PC-9 (cell line): ENCODE measurements at regions of chr1 and their contacts with region 1.

Region 1: GRCh38 chr1:167803358-167804207 is 81.8 kb downstream of the MPZL1 start:
- DNase-seq: peak; percentile 86 to 87
- H3K4me3 ChIP-seq: no peak overlapping the region
- H3K27ac ChIP-seq: no peak overlapping the region
- H3K4me1 ChIP-seq: no peaks in the 10 kb centered on the region
- H3K27me3 ChIP-seq: no peaks in the 10 kb centered on the region
- CTCF ChIP-seq: peak; percentile 94

Region 2: DNA sequence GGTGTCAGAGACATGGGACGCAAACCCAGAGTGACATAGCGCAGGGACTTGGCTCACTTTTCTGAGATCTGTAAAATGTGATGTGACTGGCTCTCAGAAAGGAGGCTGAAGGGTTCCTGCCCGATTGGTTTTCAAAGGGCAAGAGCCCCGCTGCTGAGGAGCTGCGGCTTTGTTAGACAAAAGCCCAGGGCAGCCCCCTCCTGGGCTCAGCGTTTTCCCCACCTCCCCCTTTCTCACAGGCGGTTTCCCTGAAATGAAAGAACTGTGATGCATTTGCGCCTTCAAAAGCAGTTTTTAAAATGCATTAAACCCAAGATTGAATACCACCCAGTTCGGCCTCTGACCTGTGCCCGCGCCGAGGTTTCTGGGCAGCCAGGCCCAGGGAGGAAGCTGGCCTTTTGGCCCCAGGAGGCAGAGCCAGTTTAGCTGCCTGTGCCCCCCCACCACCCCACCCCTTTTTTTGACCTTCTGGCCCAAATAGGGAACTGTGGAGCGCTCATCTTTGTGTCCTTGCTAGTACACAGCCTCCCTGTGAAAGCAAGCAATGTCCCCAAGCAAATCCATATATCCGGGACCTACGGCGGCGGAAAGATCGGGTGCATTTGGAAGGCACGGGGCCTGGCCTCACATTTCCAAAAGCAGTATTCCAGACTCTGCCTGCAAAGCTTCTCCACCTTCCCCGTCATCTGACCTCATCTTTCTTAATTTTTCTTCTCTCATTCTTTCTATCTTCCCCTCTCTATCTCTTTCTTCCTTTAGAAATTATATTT is 313.8 kb before region 1 on chr1:
- CTCF ChIA-PET with region 1: no interaction called
- POLR2A ChIA-PET with region 1: no interaction called
- intact Hi-C with region 1: no loop called
- DNase-seq: no peak
- H3K4me3 ChIP-seq: no peak overlapping the region
- H3K27ac ChIP-seq: no peak overlapping the region
- H3K4me1 ChIP-seq: no peaks in the 10 kb centered on the region
- H3K27me3 ChIP-seq: peaks cover 3% of the 10 kb centered on the region
- CTCF ChIP-seq: no peak

Region 3: DNA sequence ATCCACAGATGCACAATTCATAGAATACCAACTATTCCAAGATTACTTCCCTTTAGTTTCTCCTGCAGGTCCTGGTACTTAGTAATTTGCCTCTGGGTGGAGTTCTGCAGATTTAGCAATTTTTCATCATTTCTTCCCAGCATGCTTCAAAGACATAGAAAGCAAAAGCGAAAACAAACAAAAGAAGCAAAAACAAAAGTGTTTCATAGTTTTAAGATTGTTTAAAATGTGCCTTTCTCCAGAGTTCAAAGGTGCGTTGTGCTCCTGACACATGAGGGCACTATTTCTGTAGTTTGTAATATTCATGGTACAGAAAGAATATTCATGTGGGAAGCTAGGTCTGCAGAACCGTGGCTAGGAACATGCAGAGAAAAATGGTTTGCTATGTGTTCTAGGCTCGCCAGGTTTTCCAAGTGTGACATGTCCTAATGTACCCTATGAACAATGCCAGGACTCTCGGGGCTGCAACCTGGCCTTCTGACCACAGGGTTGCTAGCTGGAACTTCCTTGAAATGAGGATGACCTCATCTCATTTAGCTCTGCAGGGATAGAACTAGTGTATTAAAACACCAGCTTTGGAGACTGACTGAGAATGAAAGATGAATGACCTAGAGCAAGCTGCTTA is 203.5 kb before region 1 on chr1:
- CTCF ChIA-PET with region 1: no interaction called
- POLR2A ChIA-PET with region 1: no interaction called
- intact Hi-C with region 1: loop called (anchors 5 kb)
- DNase-seq: peak; percentile 23 to 64
- H3K4me3 ChIP-seq: no peak overlapping the region
- H3K27ac ChIP-seq: no peak overlapping the region
- H3K4me1 ChIP-seq: peaks cover 28% of the 10 kb centered on the region
- H3K27me3 ChIP-seq: peaks cover 7% of the 10 kb centered on the region; the same call in 1 of the 2 replicates
- CTCF ChIP-seq: peak; percentile 33; the same call in 1 of the 2 replicates

Region 4: DNA sequence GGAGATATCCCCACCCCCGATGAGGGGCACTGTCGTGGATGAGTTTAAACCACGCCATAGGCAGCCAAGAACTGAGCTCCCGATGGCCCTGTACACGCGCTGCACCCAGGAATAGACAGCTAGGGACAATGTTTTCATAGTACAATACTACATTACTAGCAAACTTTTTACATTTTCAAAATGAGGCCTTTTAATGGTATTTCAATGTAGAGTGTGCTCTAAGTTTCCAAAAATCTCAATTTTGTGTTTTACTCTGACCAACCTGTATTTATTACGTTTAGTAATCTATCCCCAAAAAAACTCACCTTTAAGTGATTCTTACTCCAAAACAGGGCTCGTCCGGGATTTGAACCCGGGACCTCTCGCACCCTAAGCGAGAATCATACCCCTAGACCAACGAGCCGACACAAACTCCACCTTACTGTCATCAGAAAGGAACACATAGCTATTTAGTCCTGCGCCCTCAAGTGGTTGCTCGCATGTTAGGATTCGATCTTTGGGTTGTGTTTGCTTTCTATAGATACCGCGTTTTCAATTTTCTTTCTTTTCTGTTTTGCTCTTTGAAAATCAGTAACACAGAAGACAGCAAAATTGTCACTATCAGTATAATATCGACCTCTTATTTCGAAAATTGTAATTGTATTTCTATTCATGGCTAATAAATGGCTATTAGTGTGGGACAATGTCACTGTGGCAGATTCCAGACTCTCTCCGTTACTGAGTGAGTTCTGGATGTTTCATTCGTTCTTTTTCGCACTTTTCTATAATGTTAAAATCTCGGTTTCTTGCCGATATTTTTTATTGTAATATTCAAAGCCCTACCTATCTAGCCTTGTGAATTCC is 88.2 kb before region 1 on chr1:
- CTCF ChIA-PET with region 1: interaction called, 13 read pairs
- POLR2A ChIA-PET with region 1: interaction called, 5 read pairs
- intact Hi-C with region 1: loop called (anchors 1 kb)
- DNase-seq: peak; percentile 81 to 85
- H3K4me3 ChIP-seq: peak overlapping the region; percentile 97
- H3K27ac ChIP-seq: peak overlapping the region; percentile 83
- H3K4me1 ChIP-seq: peaks cover 7% of the 10 kb centered on the region; the same call in 1 of the 2 replicates
- H3K27me3 ChIP-seq: no peaks in the 10 kb centered on the region
- CTCF ChIP-seq: peak; percentile 72

Region 5: DNA sequence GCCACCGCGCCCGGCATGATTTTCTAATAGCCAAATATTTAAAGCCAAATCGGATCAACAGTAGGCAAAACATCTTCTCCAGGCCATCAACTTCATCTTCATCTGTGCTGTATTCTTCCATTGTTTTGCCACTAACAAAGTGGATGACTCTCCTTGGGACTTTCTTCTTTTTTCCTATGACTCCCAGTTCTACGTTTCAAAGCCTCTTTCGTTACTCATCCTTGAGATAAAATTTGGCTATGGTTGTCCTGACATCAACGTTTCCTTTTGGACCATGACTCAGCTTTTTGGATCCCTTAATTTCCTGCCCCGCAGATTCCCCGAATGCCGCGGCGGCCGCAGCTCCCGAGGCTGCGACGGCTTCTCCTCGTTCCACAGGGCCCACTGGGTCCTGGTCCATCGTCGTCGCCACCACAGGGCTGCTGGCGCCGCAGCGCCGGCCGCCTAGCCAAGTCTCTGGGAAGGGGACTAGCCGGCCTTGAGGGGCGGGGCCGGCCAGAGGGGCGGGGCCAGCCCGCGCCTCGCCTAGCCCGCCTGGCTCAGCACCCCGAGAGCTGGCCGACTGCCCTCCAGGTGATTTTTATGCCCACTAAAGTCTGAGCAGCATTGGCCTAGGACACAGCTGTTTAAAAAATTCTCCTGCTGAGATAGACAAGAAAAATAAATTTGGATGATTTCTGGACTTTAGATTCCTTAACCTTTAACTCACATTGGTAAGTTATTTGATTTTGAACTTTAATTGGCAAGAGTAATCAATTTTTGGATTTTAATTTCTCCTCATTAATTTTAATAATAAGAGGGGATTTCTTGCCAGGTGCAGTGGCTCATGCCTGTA is 16.5 kb after region 1 on chr1:
- CTCF ChIA-PET with region 1: no interaction called
- POLR2A ChIA-PET with region 1: no interaction called
- intact Hi-C with region 1: loop called (anchors 2 kb)
- DNase-seq: peak; percentile 60 to 89
- H3K4me3 ChIP-seq: peak overlapping the region; percentile 51
- H3K27ac ChIP-seq: peak overlapping the region; percentile 66
- H3K4me1 ChIP-seq: peaks cover 27% of the 10 kb centered on the region
- H3K27me3 ChIP-seq: no peaks in the 10 kb centered on the region
- CTCF ChIP-seq: no peak